Ascending aorta (tissue), 2 donors: ENCODE measurements at regions of chrX and their contacts with region 1.

Region 1: DNA sequence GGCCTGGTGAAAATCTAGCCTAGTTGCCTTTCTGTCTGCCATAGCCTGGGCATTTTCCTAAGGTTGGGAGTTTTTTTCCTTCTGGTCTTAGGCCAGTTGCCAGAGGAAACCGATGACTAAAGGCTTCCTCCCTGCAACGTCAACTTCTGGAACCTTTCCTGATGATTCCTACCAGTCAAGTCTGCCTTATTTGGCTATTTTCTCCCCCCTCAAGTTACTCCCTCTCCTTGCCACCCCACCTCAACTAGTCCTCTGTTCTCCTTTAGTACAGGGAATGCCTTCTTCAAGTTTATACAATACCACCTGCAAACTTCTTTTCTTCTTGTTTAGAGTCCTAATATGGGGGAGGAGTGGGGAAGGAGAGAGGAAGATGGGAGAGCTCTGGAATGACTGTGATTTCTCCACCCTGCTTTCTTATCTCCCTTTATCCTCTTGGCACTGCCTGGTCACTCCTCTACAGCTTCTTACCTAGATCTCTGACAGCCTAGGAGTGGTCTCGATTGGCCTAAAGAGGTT is 10.6 kb downstream of the MSN start:
- DNase-seq: peak in 1 of 2 donors; percentile 85
- H3K4me3 ChIP-seq: peak overlapping the region in 1 of 2 donors; percentile 38
- H3K27ac ChIP-seq: peak overlapping the region; percentile 91 to 99
- H3K4me1 ChIP-seq: peaks cover 2 to 47% of the 10 kb centered on the region in 2 donors
- H3K27me3 ChIP-seq: no peaks in the 10 kb centered on the region
- CTCF ChIP-seq: no peak

Region 2: GRCh38 chrX:65601530-65602220 is 76.3 kb before region 1 on chrX:
- intact Hi-C with region 1: loop called (anchors 2 kb)
- DNase-seq: peak; percentile 80 to 96
- H3K4me3 ChIP-seq: no peak overlapping the region
- H3K27ac ChIP-seq: peak overlapping the region; percentile 88 to 89
- H3K4me1 ChIP-seq: peaks cover 10 to 37% of the 10 kb centered on the region in 2 donors
- H3K27me3 ChIP-seq: no peaks in the 10 kb centered on the region
- CTCF ChIP-seq: peak in 2 of 3 experiments; percentile 26 to 38

Region 3: GRCh38 chrX:65644621-65645270 is 33.3 kb before region 1 on chrX:
- intact Hi-C with region 1: loop called (anchors 2 kb)
- DNase-seq: peak; percentile 83 to 95
- H3K4me3 ChIP-seq: no peak overlapping the region
- H3K27ac ChIP-seq: peak overlapping the region; percentile 78 to 80
- H3K4me1 ChIP-seq: peaks cover 0 to 29% of the 10 kb centered on the region in 2 donors
- H3K27me3 ChIP-seq: no peaks in the 10 kb centered on the region
- CTCF ChIP-seq: no peak

Region 4: DNA sequence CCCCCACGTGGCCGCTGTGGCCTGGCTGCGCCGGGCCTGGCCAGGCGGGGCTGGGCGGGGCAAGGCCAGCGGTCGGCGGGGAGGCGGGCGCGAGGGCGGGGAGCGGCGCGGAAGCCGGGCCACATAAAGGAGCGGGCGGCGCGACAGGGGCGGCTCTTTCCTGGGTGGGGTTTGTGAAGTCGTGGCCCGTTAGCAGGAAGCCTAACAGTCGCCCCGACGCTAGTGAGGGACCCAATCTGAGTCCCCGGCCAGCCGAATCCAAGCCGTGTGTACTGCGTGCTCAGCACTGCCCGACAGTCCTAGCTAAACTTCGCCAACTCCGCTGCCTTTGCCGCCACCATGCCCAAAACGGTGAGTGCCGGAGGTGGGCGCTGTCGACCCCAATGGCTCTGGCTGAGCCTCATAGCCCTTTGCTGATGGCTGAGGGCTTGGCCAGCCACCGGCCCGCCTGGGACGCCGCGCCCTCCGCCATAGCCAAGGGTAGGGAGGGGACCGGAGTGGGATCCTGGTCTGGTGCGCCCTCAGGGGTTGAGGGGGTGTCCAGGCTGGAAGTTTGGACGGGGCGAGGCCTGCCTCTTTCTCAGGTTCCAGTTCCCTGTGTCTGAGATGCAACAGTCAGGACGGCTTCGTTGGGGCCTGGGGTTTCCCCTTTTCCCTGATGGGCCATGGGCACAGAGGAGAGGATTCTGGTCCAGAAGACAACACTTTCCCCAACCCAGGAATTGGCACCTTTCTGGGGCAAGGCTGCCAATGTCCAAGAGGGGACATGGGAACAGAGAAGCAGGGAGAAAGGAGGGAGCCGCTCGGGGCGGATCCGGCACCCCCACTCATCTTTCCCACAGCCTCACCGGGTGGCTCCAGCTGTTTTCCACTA is 10.3 kb before region 1 on chrX and contains the start of gene MSN:
- intact Hi-C with region 1: loop called (anchors 1 kb)
- DNase-seq: peak in 1 of 2 donors; percentile 85
- H3K4me3 ChIP-seq: peak within 1 kb of the TSS; percentile 73 to 74
- H3K27ac ChIP-seq: peak within 1 kb of the TSS; percentile 91 to 99
- H3K4me1 ChIP-seq: peaks cover 0 to under 1% of the 10 kb centered on the region in 2 donors
- H3K27me3 ChIP-seq: no peaks in the 10 kb centered on the region
- CTCF ChIP-seq: no peak
- total RNA-seq, gene MSN: 338 TPM

Region 5: GRCh38 chrX:65688403-65688871 is 10.4 kb after region 1 on chrX:
- intact Hi-C with region 1: loop called (anchors 1 kb)
- DNase-seq: no peak
- H3K4me3 ChIP-seq: no peak overlapping the region
- H3K27ac ChIP-seq: peak overlapping the region; percentile 89 to 91
- H3K4me1 ChIP-seq: peaks cover 30 to 52% of the 10 kb centered on the region in 2 donors
- H3K27me3 ChIP-seq: no peaks in the 10 kb centered on the region
- CTCF ChIP-seq: no peak

Region 6: GRCh38 chrX:65697915-65698796 is 20.1 kb after region 1 on chrX:
- intact Hi-C with region 1: loop called (anchors 2 kb)
- DNase-seq: peak in 1 of 2 donors; percentile 33
- H3K4me3 ChIP-seq: peak overlapping the region in 1 of 2 donors; percentile 15
- H3K27ac ChIP-seq: peak overlapping the region; percentile 85 to 89
- H3K4me1 ChIP-seq: peaks cover 6 to 45% of the 10 kb centered on the region in 2 donors
- H3K27me3 ChIP-seq: no peaks in the 10 kb centered on the region
- CTCF ChIP-seq: no peak

Region 7: GRCh38 chrX:65706041-65706828 is 28.2 kb after region 1 on chrX:
- intact Hi-C with region 1: loop called (anchors 2 kb)
- DNase-seq: peak in 1 of 2 donors; percentile 85
- H3K4me3 ChIP-seq: no peak overlapping the region
- H3K27ac ChIP-seq: peak overlapping the region; percentile 84 to 85
- H3K4me1 ChIP-seq: peaks cover 14 to 32% of the 10 kb centered on the region in 2 donors
- H3K27me3 ChIP-seq: no peaks in the 10 kb centered on the region
- CTCF ChIP-seq: no peak